CD14-positive monocyte (primary cell): ENCODE measurements at regions of chr2 and their contacts with region 1.

Region 1: GRCh38 chr2:158753641-158754611 is 41.2 kb upstream of the DAPL1 start:
- DNase-seq: peak; percentile 36 to 44 (median 40)
- H3K4me3 ChIP-seq: no peak overlapping the region
- H3K4me3 Mint-ChIP-seq: peak overlapping the region in 1 of 2 donors; percentile 20
- H3K27ac ChIP-seq: no peak overlapping the region
- H3K27ac Mint-ChIP-seq: no peak overlapping the region
- H3K4me1 ChIP-seq: no peaks in the 10 kb centered on the region
- H3K4me1 Mint-ChIP-seq: peaks cover 5% of the 10 kb centered on the region
- H3K27me3 ChIP-seq: no peaks in the 10 kb centered on the region
- H3K27me3 Mint-ChIP-seq: peaks cover 0 to 2% (median 1%) of the 10 kb centered on the region in 3 donors
- CTCF ChIP-seq: peak; percentile 81

Region 2: DNA sequence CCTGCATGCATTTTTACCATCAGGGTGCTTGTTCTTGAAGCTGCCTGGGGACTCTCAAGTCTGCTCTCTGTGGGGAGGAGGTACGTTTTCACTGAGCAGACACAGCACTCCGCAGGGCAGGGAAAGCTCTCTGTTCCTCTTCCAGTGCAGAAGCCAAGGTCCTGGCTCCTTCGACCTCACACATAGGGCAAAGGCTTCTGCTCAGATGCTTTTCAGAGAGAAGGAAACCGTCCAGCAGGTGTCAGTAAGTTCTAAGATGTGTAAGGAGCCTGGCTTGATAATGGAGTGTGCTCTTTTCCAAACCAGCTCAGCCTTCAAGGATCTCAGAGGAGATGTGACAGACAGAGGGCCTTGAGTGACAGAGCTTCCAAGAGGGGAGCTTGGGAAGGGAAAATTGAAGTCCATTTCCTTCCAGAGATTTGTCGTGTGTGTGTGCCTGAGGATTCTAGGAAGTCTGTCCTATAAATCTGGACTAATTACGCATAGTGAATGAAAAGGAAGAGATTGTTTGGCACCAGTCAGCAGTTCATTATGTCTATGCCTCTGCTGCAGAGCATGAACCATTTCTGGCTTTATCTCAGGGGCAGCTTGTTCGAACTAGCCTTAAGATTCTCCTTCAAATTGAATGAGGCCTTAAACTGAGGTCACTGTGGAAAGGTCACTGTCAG is 719.6 kb before region 1 on chr2:
- intact Hi-C with region 1: loop called (anchors 5 kb)
- DNase-seq: peak; percentile 57 to 74 (median 64)
- H3K4me3 ChIP-seq: no peak overlapping the region
- H3K4me3 Mint-ChIP-seq: no peak overlapping the region
- H3K27ac ChIP-seq: no peak overlapping the region
- H3K27ac Mint-ChIP-seq: peak overlapping the region in 3 of 7 donors; percentile 4 to 46 (median 15)
- H3K4me1 ChIP-seq: peaks cover 0 to 7% of the 10 kb centered on the region in 2 donors
- H3K4me1 Mint-ChIP-seq: peaks cover 15% of the 10 kb centered on the region
- H3K27me3 ChIP-seq: no peaks in the 10 kb centered on the region
- H3K27me3 Mint-ChIP-seq: no peaks in the 10 kb centered on the region
- CTCF ChIP-seq: peak; percentile 61